Left ventricle myocardium superior (tissue), 1 donor: ENCODE measurements at regions of chr9 and their contacts with region 1.

Region 1: GRCh38 chr9:93962561-93963440 is 7.6 kb upstream of the BARX1 start:
- DNase-seq: peak; percentile 79
- ATAC-seq: peak; percentile 88

Region 2: GRCh38 chr9:93682232-93682968 is 280.4 kb before region 1 on chr9:
- intact Hi-C with region 1: loop called (anchors 5 kb)
- DNase-seq: peak; percentile 76
- ATAC-seq: peak; percentile 67

Region 3: DNA sequence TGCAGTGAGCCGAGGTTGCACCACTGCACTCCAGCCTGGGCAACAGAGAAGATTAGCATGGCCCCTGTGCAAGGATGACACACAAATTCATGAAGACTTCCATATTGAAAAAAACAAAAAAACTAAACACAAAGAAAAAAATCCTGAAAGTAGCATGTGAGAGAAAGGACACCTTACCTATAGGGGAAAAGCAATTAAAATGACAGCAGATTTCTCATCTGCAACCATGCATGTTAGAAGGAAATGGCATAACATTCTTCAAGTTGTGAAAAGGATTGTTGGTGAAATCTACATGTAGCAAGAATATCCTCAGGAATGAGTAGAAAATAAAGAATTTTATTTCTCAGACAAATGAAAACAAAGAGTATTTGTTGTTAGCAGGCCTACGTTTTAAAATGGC is 282.9 kb after region 1 on chr9:
- intact Hi-C with region 1: no loop called
- DNase-seq: no peak
- ATAC-seq: no peak